ENCODE measurements at regions of chr3 and their contacts with region 1.

Region 1: GRCh38 chr3:112013058-112013783 is 14.5 kb downstream of the TAGLN3 start:
- DNase-seq: peak; percentile 74
- ATAC-seq: peak; percentile 92
- H3K4me3 ChIP-seq: no peak overlapping the region
- H3K27ac ChIP-seq: peak overlapping the region; percentile 1; the same call in 1 of the 2 replicates
- H3K4me1 ChIP-seq: peaks cover 0 to 14% of the 10 kb centered on the region in 2 experiments; a peak in 2 of 4 replicates
- H3K27me3 ChIP-seq: no peaks in the 10 kb centered on the region
- CTCF ChIP-seq: peak; percentile 79 to 90 (median 89)
- POLR2A ChIP-seq: no peak
- RAD21 ChIP-seq: peak; percentile 93

Region 2: DNA sequence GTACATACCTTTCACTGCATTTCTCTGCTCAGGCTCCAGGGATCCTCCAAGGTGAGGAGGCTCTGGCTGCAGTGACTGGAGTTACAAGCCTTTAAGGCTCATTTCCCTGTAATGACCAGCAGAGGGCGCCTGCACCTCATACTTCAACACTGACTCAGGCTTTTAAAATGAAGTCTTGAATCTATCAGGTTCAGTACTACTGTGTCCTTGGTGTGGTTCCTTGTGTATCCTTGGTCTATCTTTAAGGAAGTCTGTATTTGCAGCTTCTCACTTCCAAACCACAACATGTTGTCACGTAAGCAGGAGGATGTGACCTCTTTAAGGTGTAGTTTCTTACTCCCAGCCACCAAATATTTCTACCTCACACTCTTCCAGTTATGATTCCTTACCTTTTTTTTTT is 295.6 kb before region 1 on chr3:
- CTCF ChIA-PET with region 1: interaction called, 32 read pairs
- POLR2A ChIA-PET with region 1: no interaction called
- RAD21 ChIA-PET with region 1: no interaction called
- intact Hi-C with region 1: no loop called
- DNase-seq: peak; percentile 81
- ATAC-seq: peak; percentile 93
- H3K4me3 ChIP-seq: no peak overlapping the region
- H3K27ac ChIP-seq: peak overlapping the region; percentile 47
- H3K4me1 ChIP-seq: peaks cover 21 to 52% of the 10 kb centered on the region in 2 experiments
- H3K27me3 ChIP-seq: no peaks in the 10 kb centered on the region
- CTCF ChIP-seq: peak; percentile 84 to 96 (median 95)
- POLR2A ChIP-seq: no peak
- RAD21 ChIP-seq: peak; percentile 100

Region 3: GRCh38 chr3:111936191-111936841 is 76.9 kb before region 1 on chr3:
- CTCF ChIA-PET with region 1: interaction called, 12 read pairs
- POLR2A ChIA-PET with region 1: no interaction called
- RAD21 ChIA-PET with region 1: no interaction called
- intact Hi-C with region 1: no loop called
- DNase-seq: peak; percentile 60
- ATAC-seq: peak; percentile 78
- H3K4me3 ChIP-seq: peak overlapping the region in 1 of 2 experiments; percentile 0; a peak in 1 of 4 replicates
- H3K27ac ChIP-seq: peak overlapping the region; percentile 96
- H3K4me1 ChIP-seq: peaks cover 66 to 78% of the 10 kb centered on the region in 2 experiments
- H3K27me3 ChIP-seq: no peaks in the 10 kb centered on the region
- CTCF ChIP-seq: no peak
- POLR2A ChIP-seq: no peak
- RAD21 ChIP-seq: 0 out of 2 replicates have a peak, but pooled peaks have one; percentile 2

Region 4: DNA sequence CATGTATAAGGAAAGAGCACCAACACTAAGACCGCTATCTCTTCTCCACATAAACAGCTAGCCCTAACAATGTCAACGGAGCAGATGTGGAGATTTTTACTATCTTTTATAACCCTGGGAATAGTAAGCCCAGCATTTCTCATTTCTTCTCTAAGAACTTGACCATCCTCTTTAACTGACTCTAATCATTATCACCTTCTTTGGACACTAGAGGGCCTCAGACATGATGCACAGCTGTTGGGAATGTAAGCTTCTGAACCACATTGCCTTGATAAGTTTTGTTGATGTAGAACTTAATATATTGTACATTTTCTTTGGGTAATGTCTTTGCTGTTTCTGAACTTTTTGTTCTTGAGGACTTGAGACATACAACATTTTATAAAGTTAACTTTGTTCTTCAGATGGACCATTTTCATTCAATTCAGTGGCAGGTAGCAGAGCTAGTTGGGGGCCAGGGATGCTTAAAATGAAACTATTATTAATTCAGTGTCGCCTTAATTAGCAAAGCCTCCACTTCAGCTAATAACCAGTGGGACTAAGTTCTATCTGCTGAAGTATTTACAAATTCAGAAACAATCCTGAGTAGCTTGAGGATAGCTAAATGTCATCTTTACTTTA is 24.1 kb before region 1 on chr3:
- CTCF ChIA-PET with region 1: interaction called, 109 read pairs
- POLR2A ChIA-PET with region 1: interaction called, 4 read pairs
- RAD21 ChIA-PET with region 1: interaction called, 7 to 9 read pairs
- intact Hi-C with region 1: loop called (anchors 1 kb)
- DNase-seq: peak; percentile 63
- ATAC-seq: peak; percentile 87
- H3K4me3 ChIP-seq: no peak overlapping the region
- H3K27ac ChIP-seq: peak overlapping the region; percentile 20; the same call in 1 of the 2 replicates
- H3K4me1 ChIP-seq: no peaks in the 10 kb centered on the region
- H3K27me3 ChIP-seq: no peaks in the 10 kb centered on the region
- CTCF ChIP-seq: peak; percentile 76 to 94 (median 86)
- POLR2A ChIP-seq: no peak
- RAD21 ChIP-seq: peak; percentile 78

Region 5: GRCh38 chr3:112027142-112027541 is 13.9 kb after region 1 on chr3:
- CTCF ChIA-PET with region 1: interaction called, 17 read pairs
- POLR2A ChIA-PET with region 1: no interaction called
- RAD21 ChIA-PET with region 1: no interaction called
- intact Hi-C with region 1: no loop called
- DNase-seq: no peak
- ATAC-seq: no peak
- H3K4me3 ChIP-seq: no peak overlapping the region
- H3K27ac ChIP-seq: no peak overlapping the region
- H3K4me1 ChIP-seq: no peaks in the 10 kb centered on the region
- H3K27me3 ChIP-seq: no peaks in the 10 kb centered on the region
- CTCF ChIP-seq: no peak
- POLR2A ChIP-seq: no peak
- RAD21 ChIP-seq: no peak

Region 6: DNA sequence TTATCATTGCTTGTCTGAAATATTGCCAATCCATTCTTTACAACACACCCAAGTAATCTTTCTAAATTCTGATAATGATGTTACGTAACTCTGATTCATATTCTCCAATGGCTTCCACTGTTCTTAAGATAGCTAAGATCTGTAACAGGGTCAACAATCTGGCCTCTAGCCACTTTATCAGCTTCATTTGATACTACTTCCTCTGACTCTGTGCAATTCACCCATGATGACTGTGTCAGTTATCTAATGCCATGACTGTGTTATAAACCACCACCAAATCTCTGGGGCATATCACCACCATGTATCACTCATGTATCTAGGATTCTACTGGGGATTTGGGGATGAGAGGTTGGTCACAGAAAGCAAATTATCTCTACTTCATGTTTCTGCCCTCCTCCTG is 363.8 kb after region 1 on chr3:
- CTCF ChIA-PET with region 1: no interaction called
- POLR2A ChIA-PET with region 1: no interaction called
- RAD21 ChIA-PET with region 1: no interaction called
- intact Hi-C with region 1: no loop called
- DNase-seq: no peak
- ATAC-seq: no peak
- H3K4me3 ChIP-seq: no peak overlapping the region
- H3K27ac ChIP-seq: no peak overlapping the region
- H3K4me1 ChIP-seq: no peaks in the 10 kb centered on the region
- H3K27me3 ChIP-seq: no peaks in the 10 kb centered on the region
- CTCF ChIP-seq: no peak
- POLR2A ChIP-seq: no peak
- RAD21 ChIP-seq: no peak